GM10248 (cell line): ENCODE measurements at regions of chr2 and their contacts with region 1.

Region 1: DNA sequence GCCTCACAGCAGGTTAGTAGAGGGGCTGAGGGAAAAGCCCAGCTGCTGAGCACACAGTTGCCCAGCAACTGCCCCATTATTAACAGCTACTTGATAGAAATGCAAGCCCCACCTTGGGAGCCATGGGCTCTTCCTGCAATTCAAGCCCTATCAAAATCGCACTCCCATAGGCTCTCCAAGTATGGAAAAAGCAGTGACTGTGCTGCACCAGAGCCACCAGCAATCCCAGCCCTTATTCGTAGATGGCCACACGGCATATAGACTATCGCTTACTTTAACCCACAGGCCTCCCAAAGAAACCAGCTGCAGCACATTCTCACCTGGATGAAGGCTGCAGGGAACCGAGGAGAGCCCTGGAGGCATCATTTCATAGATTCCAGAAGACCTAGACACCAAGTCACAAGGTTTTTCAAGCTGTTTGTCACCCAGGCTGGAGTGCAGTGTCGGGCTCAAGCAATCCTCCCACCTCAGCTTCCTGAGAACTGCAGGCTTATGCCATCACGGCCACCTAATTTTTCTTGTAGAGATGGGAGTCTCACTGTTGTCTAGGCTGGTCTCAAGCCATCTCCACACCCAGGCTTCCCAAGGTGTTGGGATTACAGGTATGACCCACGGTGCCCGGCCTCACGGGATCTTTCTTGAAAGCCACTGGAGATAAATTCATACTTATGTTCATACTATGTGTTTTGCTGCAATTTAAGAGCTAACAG is 11.3 kb downstream of the NCL start:
- DNase-seq: no peak
- CTCF ChIP-seq: no peak

Region 2: DNA sequence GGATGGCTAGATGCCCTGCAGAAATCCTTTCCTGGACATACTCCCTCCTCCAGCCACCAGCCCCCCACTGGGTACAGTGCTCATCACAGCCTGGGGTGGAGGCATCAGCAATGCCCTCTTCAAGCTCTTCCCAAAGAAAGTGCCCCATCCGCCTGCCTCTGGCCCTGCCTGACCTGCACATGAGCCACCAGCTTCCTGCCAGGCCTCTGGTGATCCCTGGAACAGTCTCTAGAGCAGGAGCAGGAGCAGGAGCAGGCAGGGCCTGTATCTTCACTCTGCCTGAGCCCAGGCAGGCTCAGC is 794.4 kb before region 1 on chr2:
- CTCF ChIA-PET with region 1: no interaction called
- POLR2A ChIA-PET with region 1: interaction called, 21 read pairs
- DNase-seq: no peak
- CTCF ChIP-seq: no peak

Region 3: DNA sequence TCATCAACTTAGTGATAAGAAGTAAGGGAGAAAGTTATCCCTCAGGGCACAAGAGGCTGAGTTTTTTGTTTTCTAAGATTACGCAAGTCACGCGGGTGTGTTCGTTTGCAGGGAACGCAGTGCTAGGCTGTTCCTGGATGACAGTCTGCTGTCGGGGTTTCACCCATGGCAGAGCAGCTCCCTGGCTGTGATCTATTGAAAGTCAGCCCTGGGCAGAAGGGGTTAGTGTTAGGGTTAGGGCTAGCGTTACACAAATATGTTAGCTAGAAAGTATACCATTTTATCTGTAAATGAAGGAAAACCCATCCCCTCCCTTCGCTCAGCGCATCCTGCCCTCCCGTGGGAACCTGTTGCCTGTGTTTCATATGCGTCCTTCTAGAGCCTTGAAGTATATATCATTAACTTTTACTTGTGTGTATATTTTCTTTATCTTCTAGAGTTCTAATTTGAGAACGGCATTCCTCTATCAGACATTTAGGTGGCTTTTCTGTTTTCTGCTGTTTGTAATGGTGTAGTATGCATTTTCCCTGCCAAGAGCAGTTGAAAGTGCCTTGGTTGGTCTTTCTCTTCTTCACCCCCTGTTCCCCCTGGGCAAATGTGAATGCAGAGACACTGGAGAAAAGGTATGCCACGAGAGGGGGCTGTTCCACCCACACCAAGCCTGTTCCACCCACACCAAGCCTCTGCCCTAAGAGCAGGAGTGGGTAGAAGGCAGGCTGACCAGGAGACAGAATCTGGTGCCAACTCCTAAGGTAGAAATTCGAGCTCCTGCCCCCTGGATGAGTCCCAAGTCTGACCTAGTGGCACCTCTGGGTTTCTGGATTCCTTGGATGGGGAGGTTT is 207.5 kb before region 1 on chr2:
- CTCF ChIA-PET with region 1: no interaction called
- POLR2A ChIA-PET with region 1: no interaction called
- DNase-seq: no peak
- CTCF ChIP-seq: no peak

Region 4: GRCh38 chr2:231463698-231464575 is 11.0 kb after region 1 on chr2 and contains the start of gene NCL:
- CTCF ChIA-PET with region 1: interaction called, 23 read pairs
- POLR2A ChIA-PET with region 1: interaction called, 120 read pairs
- DNase-seq: peak; percentile 84
- CTCF ChIP-seq: no peak

Region 5: GRCh38 chr2:231910771-231911170 is 457.8 kb after region 1 on chr2:
- CTCF ChIA-PET with region 1: no interaction called
- POLR2A ChIA-PET with region 1: no interaction called
- DNase-seq: no peak
- CTCF ChIP-seq: no peak